ENCODE measurements at regions of chr2 and their contacts with region 1.

Region 1: DNA sequence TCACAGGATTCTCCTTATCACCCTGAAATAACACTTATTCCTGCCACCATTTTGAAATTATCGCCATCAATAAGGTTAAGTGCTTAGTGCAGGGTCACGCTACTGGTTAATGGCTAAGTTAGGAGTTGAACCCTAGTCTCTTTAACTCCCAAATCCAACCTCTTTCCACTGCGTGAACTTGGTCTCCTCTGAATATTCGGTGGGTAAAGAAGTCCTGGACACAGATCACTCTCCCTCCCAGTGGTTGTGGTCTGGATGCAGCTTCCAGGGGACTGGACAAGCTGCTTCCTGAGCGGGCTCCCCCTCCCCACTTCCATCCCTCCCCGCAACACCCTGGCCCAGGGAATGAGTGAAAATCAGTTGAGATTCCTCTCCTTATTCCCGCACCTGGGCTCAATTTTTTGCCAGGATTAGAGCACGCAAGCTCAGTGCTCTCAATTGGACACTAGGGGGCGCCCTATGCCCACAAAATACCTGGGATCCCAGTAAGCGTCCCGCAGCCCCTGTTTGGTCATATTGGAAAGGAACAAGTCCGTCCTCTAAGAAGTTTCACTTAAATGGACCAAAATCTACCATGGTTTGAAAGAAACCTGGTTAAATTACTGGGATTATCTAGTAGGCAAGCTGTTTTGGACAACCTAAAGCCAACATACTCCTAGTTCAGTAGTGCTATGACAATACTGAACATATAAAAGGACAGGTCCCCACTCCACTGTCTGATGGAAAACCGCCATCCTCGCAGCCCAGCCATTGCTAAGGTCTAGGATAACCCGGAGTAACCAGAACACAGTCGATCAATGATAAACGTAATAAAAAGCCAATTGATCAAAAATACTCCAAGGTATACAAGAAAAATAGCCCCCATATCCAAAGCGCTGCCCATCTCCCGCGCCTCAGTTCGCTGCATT is 40.4 kb downstream of the DHRS9 start:
- DNase-seq: peak; percentile 80
- H3K4me3 Mint-ChIP-seq: no peak overlapping the region
- H3K27ac Mint-ChIP-seq: no peak overlapping the region
- H3K4me1 Mint-ChIP-seq: peaks cover 54% of the 10 kb centered on the region
- H3K27me3 Mint-ChIP-seq: peaks cover 26% of the 10 kb centered on the region

Region 2: GRCh38 chr2:168961450-168962229 is 148.1 kb before region 1 on chr2:
- CTCF ChIA-PET with region 1: interaction called, 23 read pairs
- DNase-seq: peak; percentile 24
- H3K4me3 Mint-ChIP-seq: no peak overlapping the region
- H3K27ac Mint-ChIP-seq: no peak overlapping the region
- H3K4me1 Mint-ChIP-seq: peaks cover 18% of the 10 kb centered on the region
- H3K27me3 Mint-ChIP-seq: peaks cover 12% of the 10 kb centered on the region

Region 3: GRCh38 chr2:169095621-169096105 is 14.1 kb before region 1 on chr2:
- CTCF ChIA-PET with region 1: interaction called, 37 read pairs
- DNase-seq: no peak
- H3K4me3 Mint-ChIP-seq: no peak overlapping the region
- H3K27ac Mint-ChIP-seq: no peak overlapping the region
- H3K4me1 Mint-ChIP-seq: peaks cover 13% of the 10 kb centered on the region
- H3K27me3 Mint-ChIP-seq: no peaks in the 10 kb centered on the region

Region 4: GRCh38 chr2:169131587-169132512 is 22.1 kb after region 1 on chr2:
- CTCF ChIA-PET with region 1: interaction called, 94 read pairs
- DNase-seq: no peak
- H3K4me3 Mint-ChIP-seq: no peak overlapping the region
- H3K27ac Mint-ChIP-seq: no peak overlapping the region
- H3K4me1 Mint-ChIP-seq: no peaks in the 10 kb centered on the region
- H3K27me3 Mint-ChIP-seq: no peaks in the 10 kb centered on the region

Region 5: GRCh38 chr2:169141713-169142352 is 32.1 kb after region 1 on chr2:
- CTCF ChIA-PET with region 1: interaction called, 147 read pairs
- DNase-seq: peak; percentile 68
- H3K4me3 Mint-ChIP-seq: no peak overlapping the region
- H3K27ac Mint-ChIP-seq: no peak overlapping the region
- H3K4me1 Mint-ChIP-seq: no peaks in the 10 kb centered on the region
- H3K27me3 Mint-ChIP-seq: peaks cover 3% of the 10 kb centered on the region

Region 6: DNA sequence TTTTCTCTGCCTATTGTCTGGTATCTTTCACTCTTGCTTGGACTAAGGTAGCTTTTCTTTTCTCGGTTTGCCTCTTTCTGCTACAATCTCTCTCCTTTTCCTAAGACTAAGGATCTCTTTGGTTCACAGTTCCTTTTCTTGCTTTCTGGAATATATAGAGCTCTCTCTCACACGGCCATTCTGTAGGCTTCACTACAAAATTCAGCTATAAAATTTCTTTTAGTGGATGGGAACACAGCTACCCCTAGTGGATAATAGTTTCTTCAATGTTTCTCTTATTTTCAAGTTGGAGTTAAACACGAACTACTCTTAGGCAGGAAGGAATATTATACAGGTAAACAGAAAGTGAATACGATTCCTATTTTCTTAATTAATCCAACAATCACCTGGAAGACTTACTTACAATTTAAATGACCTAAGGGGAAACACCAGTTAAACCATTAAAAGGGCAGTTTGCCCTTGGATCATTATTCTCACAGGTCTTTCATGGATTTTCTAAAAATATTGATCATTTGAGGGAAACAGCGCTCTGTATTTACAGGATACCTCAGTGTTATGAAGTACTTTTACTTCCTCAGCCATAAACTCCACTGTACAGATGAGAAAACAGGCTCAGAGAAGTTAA is 112.1 kb after region 1 on chr2:
- CTCF ChIA-PET with region 1: interaction called, 12 read pairs
- DNase-seq: no peak
- H3K4me3 Mint-ChIP-seq: no peak overlapping the region
- H3K27ac Mint-ChIP-seq: no peak overlapping the region
- H3K4me1 Mint-ChIP-seq: no peaks in the 10 kb centered on the region
- H3K27me3 Mint-ChIP-seq: no peaks in the 10 kb centered on the region

Region 7: DNA sequence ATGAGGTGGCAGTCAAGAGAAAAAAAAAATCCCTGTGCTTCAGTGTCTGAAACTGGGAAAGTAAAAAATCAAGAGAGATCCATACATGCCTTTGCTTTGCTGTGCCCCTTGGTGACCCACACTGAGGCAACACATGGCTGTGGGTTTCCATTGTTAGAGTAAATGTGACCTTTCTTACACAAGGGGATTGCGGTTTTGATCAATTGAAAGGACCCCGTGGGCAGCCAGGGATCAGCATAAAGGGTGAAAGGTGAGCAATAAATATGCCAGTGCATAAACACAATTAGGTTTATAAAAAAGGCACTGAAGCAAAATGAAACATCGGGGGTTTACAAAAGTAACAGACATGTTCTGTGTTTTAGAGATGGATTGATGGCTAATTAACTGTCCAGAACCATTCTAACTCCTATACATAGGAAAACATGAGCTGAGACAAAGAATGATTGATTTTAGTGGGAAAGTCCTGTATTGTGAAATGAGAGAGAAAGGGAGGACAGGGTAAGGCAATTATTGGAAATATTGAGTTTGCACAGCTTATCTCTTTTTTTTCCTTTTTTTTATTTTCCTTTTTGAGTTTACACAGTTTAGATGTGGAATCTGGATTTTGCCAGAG is 328.8 kb after region 1 on chr2:
- CTCF ChIA-PET with region 1: no interaction called
- DNase-seq: no peak
- H3K4me3 Mint-ChIP-seq: no peak overlapping the region
- H3K27ac Mint-ChIP-seq: no peak overlapping the region
- H3K4me1 Mint-ChIP-seq: no peaks in the 10 kb centered on the region
- H3K27me3 Mint-ChIP-seq: peaks cover 12% of the 10 kb centered on the region

Measured in activated naive CD4-positive, alpha-beta T cell treated with anti-CD3 and anti-CD28 coated beads, Interleukin-2, amount 10 ng/mL, durations not matched to agents 7 days and 5 days (primary cell).